Activated B cell treated with CpG ODN at 0.5 μM for 24 hours (primary cell): ENCODE measurements at regions of chr9 and their contacts with region 1.

Region 1: DNA sequence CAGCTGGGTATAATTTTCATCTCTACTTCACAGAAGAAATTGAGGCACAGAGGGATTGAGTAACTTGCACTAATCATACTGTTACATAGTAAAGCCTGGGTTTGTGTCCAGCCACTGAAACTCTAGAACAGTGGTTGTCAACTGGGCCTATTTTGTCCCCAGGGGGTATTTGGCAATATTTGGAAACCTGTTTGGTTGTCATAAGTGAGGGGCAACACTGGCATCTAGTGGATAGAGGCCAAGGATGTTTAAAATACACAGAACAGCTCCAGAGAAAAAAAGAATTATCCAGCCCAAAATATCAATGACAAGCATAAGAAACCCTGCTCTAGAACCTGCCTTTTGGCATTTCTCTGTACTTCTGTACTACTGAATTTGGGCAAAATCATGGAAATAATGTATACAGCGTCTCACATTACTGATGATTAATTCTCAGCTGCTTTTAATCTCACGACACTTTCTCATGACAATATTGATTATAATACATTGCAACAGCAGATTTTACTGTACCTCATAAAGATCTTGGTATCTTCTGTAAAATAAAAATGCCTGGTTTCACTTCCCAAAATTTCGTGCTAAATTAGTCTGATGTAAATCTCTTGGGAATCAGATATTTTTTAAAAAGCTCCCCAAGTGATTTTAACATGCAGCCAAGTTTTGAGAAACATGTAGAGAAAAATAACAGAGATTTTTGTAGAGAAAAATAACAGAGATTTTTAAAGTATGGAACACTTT is 112.7 kb downstream of the RORB start:
- DNase-seq: no peak
- ATAC-seq: peak; percentile 68
- H3K4me3 Mint-ChIP-seq: peak overlapping the region; percentile 13
- H3K27ac Mint-ChIP-seq: peak overlapping the region; percentile 57
- H3K4me1 Mint-ChIP-seq: peaks cover 39% of the 10 kb centered on the region
- H3K27me3 Mint-ChIP-seq: peaks cover 3% of the 10 kb centered on the region
- CTCF ChIP-seq: no peak

Region 2: DNA sequence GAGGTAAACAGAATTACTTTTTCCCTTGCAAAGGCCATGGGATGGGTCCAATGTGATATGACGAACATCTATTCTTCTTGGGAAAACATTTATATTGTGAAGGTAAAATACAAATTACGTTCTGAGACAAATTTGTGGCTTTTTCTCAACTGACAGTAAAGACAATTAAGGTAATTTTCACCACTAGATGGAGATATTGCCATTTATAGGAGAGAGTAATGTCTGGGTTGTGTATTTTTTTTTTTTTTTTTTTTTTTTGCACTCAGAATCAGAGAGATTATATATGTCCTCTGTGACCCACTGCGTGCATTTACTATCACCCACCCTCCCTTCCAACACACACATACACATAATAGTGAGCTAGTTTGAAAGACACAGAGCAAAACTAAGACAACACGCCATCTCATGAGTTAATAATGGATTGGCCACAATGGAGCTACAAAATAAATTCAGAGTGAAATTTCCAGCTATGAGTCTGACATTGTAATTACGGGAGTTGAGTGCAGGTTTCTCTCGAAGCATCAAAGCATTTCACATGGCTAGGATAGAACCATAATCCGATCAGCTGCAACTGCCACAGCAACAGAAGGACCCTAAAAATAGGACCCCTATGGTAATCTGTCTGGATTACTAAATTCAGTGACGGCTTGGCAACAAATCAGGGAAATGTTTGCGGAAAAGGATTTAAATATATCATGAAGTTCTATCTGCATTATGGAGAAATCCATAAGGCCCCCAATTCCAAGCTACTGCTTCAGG is 1409.0 kb before region 1 on chr9:
- CTCF ChIA-PET with region 1: no interaction called
- POLR2A ChIA-PET with region 1: no interaction called
- intact Hi-C with region 1: loop called (anchors 1 kb)
- DNase-seq: no peak
- ATAC-seq: no peak
- H3K4me3 Mint-ChIP-seq: no peak overlapping the region
- H3K27ac Mint-ChIP-seq: no peak overlapping the region
- H3K4me1 Mint-ChIP-seq: no peaks in the 10 kb centered on the region
- H3K27me3 Mint-ChIP-seq: peaks cover 4% of the 10 kb centered on the region
- CTCF ChIP-seq: no peak

Region 3: GRCh38 chr9:74577956-74578355 is 31.9 kb before region 1 on chr9:
- CTCF ChIA-PET with region 1: no interaction called
- POLR2A ChIA-PET with region 1: no interaction called
- intact Hi-C with region 1: loop called (anchors 1 kb)
- DNase-seq: no peak
- ATAC-seq: no peak
- H3K4me3 Mint-ChIP-seq: no peak overlapping the region
- H3K27ac Mint-ChIP-seq: no peak overlapping the region
- H3K4me1 Mint-ChIP-seq: no peaks in the 10 kb centered on the region
- H3K27me3 Mint-ChIP-seq: no peaks in the 10 kb centered on the region
- CTCF ChIP-seq: no peak

Region 4: GRCh38 chr9:74630228-74630627 is 20.4 kb after region 1 on chr9:
- CTCF ChIA-PET with region 1: no interaction called
- POLR2A ChIA-PET with region 1: no interaction called
- intact Hi-C with region 1: loop called (anchors 2 kb)
- DNase-seq: no peak
- ATAC-seq: no peak
- H3K4me3 Mint-ChIP-seq: no peak overlapping the region
- H3K27ac Mint-ChIP-seq: no peak overlapping the region
- H3K4me1 Mint-ChIP-seq: peaks cover 14% of the 10 kb centered on the region
- H3K27me3 Mint-ChIP-seq: peaks cover 18% of the 10 kb centered on the region
- CTCF ChIP-seq: no peak

Region 5: GRCh38 chr9:74645007-74645639 is 35.3 kb after region 1 on chr9:
- CTCF ChIA-PET with region 1: interaction called, 11 read pairs
- POLR2A ChIA-PET with region 1: no interaction called
- intact Hi-C with region 1: no loop called
- DNase-seq: no peak
- ATAC-seq: no peak
- H3K4me3 Mint-ChIP-seq: no peak overlapping the region
- H3K27ac Mint-ChIP-seq: no peak overlapping the region
- H3K4me1 Mint-ChIP-seq: no peaks in the 10 kb centered on the region
- H3K27me3 Mint-ChIP-seq: peaks cover 19% of the 10 kb centered on the region
- CTCF ChIP-seq: no peak